ENCODE measurements at regions of chr4 and their contacts with region 1.

Region 1: GRCh38 chr4:25312496-25313200 is at the start of gene ZCCHC4:
- DNase-seq: peak; percentile 95
- H3K4me3 ChIP-seq: peak within 1 kb of the TSS; percentile 82
- H3K27ac ChIP-seq: peak within 1 kb of the TSS; percentile 48
- H3K4me1 ChIP-seq: peaks cover 40% of the 10 kb centered on the region
- CTCF ChIP-seq: peak; percentile 99
- total RNA-seq, gene ZCCHC4: 12.4 and 14.9 TPM in 2 replicates

Region 2: DNA sequence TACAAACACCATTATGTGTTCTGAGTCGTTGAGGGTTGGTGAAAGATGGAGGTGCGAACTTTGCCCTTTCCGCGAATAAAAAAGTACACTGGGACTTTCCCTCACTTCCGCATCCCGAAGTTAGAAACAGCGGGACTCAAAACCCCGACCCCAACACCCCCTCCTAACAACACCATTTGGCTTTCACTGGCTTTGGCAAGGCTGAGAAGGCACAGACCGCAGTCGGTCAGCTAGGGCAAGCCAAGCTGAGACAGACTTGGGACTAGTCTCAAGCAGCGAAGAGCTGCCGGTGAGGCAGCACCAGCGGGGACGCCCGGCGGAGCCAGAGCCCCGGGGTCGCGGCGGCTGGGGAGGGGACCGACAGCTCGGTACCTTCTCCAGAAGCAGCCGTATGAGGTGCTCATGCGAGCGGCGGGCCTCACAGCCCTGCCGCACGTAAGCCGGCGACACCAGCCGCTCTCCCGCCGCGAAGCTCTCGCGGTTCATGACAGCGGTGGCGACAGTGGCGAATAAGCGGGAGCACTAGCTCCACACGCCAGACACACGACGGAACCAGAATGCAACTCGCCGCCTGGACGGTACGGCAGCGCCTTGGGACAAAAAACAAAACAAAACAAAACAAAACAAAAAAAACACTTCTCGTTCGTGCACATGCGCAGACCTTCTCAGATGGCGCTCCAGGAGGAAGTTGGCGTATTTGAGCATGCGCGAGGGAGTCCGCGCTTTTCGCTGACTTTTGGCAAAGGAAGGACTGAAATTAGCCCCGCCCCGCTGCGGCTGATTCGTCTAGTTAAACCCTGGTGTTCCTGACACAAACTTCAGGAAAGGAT is 152.5 kb before region 1 on chr4 and contains the start of gene SEPSECS:
- CTCF ChIA-PET with region 1: interaction called, 5 read pairs
- POLR2A ChIA-PET with region 1: interaction called, 9 read pairs
- intact Hi-C with region 1: loop called (anchors 1 kb)
- DNase-seq: peak; percentile 97
- H3K4me3 ChIP-seq: peak within 1 kb of the TSS; percentile 75
- H3K27ac ChIP-seq: peak within 1 kb of the TSS; percentile 89
- H3K4me1 ChIP-seq: peaks cover 24% of the 10 kb centered on the region
- CTCF ChIP-seq: no peak
- total RNA-seq, gene SEPSECS: 5.0 and 5.8 TPM in 2 replicates

Region 3: GRCh38 chr4:25180524-25181131 is 132.0 kb before region 1 on chr4:
- CTCF ChIA-PET with region 1: no interaction called
- POLR2A ChIA-PET with region 1: interaction called, 3 read pairs
- intact Hi-C with region 1: loop called (anchors 2 kb)
- DNase-seq: peak; percentile 80
- H3K4me3 ChIP-seq: no peak overlapping the region
- H3K27ac ChIP-seq: no peak overlapping the region
- H3K4me1 ChIP-seq: no peaks in the 10 kb centered on the region
- CTCF ChIP-seq: peak; percentile 96

Region 4: DNA sequence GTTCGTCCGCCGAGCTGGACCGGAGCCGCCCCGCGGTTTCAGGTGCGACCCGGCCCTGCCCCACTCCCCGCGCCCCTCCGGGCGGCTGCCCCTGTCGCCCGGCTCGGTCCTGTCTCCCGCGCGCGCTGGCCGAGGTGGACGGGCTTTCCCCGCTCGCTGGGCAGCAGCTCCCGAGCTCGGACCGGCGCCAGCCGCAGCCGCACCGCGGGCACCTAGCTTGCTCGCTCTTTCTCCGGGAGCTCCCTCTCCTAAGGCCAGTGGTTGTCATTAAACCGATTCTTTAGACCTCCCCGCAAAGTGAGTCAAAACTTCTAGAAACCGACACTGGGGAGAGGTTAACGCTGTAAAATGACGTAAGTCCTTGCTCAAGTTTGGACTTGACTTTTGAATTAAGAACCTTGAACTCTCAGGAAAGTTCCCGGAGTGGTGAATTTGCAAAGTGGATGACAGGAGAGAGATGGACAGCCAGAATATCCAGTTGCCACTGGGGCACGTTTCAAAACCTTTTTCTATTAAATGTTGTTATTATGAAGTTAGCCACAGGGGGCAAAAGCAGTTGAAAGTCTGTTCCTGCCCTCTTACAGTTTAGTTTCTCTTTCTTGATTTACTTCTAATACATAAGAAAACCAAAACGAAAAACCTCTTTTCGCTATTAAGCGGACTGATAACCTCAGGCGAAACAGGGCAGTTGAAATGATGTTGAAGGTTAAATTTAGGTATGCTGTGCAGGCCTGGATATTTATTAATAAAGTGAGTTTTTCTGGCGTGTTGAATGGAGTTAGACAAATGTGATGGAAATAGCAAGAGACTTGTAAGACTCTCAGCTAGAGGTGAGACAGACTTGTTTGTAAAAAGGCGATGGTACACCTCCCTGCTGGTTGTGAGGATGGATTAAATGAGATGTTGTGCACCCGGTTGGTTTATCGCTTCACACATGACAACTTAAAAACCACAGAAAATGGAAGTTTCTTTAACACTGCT is 78.0 kb before region 1 on chr4:
- CTCF ChIA-PET with region 1: interaction called, 5 read pairs
- POLR2A ChIA-PET with region 1: interaction called, 41 read pairs
- intact Hi-C with region 1: loop called (anchors 1 kb)
- DNase-seq: peak; percentile 85
- H3K4me3 ChIP-seq: peak overlapping the region; percentile 96
- H3K27ac ChIP-seq: peak overlapping the region; percentile 88
- H3K4me1 ChIP-seq: peaks cover 43% of the 10 kb centered on the region
- CTCF ChIP-seq: peak; percentile 79

Region 5: GRCh38 chr4:25367004-25367621 is 54.5 kb after region 1 on chr4:
- CTCF ChIA-PET with region 1: interaction called, 3 read pairs
- POLR2A ChIA-PET with region 1: no interaction called
- intact Hi-C with region 1: loop called (anchors 2 kb)
- DNase-seq: peak; percentile 58
- H3K4me3 ChIP-seq: no peak overlapping the region
- H3K27ac ChIP-seq: no peak overlapping the region
- H3K4me1 ChIP-seq: no peaks in the 10 kb centered on the region
- CTCF ChIP-seq: peak; percentile 97

Region 6: GRCh38 chr4:25376754-25377571 is 64.3 kb after region 1 on chr4 and contains the start of gene ANAPC4:
- CTCF ChIA-PET with region 1: interaction called, 3 read pairs
- POLR2A ChIA-PET with region 1: interaction called, 5 read pairs
- intact Hi-C with region 1: loop called (anchors 1 kb)
- DNase-seq: peak; percentile 96
- H3K4me3 ChIP-seq: peak within 1 kb of the TSS; percentile 100
- H3K27ac ChIP-seq: peak within 1 kb of the TSS; percentile 54
- H3K4me1 ChIP-seq: peaks cover 24% of the 10 kb centered on the region
- CTCF ChIP-seq: no peak
- total RNA-seq, gene ANAPC4: 32.7 and 36.1 TPM in 2 replicates

Measured in OCI-LY7 (cell line).